ENCODE measurements at regions of chr3 and their contacts with region 1.

Region 1: DNA sequence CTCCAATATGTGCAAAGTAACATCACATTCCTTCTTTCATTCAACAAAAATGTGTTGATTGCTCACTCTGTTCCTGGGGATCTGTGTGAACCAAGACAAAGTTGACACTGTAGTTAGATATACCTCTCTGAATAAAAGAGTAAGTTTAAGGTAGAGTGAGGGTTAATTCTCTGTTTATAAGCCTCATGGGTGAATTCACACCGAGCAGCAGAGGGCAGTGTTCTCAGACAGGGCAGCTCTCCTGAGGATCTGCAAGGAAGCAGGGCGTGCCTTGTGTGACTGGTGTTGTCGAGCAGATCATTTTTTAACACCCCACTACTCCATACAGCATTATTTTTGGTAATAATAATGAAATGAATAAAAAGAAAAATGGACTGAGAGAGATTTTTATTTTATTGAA is 34.4 kb downstream of the PAQR9 start:
- DNase-seq: peak; percentile 61
- ATAC-seq: peak; percentile 82
- H3K4me3 ChIP-seq: no peak overlapping the region
- H3K27ac ChIP-seq: no peak overlapping the region
- H3K4me1 ChIP-seq: no peaks in the 10 kb centered on the region
- H3K27me3 ChIP-seq: peaks cover 16% of the 10 kb centered on the region
- CTCF ChIP-seq: peak; percentile 57
- POLR2A ChIP-seq: no peak
- RAD21 ChIP-seq: peak; percentile 59

Region 2: DNA sequence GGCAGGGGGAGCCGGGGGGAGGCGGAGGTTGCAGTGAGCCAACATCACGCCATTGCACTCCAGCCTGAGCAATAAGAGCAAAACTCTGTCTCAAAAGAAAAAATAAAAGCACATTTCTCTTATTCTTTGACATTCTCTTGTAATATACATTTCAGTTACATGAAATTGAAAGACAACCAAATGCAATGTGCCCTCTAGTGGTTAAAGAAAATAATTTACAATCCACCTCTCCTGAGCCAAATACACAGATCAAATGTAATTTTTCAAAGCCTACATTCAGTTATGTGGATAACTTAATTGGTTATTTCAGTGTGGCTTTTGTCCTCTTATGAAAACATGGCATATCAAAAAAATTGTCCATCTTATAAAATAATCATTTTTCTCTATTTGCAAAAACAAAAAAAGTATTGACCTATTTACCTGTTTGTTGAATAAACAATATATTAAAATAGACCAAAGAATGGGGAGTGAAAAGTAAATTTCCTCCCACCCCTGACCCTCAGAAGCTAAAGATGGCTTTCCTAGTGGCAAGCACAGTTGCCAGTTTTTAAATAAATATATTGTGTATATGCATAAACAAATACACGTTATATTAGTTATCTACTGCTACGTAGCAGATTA is 58.1 kb after region 1 on chr3:
- CTCF ChIA-PET with region 1: no interaction called
- POLR2A ChIA-PET with region 1: no interaction called
- dilution Hi-C with region 1: no loop called
- in situ Hi-C with region 1: no loop called
- intact Hi-C with region 1: loop called (anchors 1 kb)
- DNase-seq: peak; percentile 55
- ATAC-seq: peak; percentile 65
- H3K4me3 ChIP-seq: no peak overlapping the region
- H3K27ac ChIP-seq: no peak overlapping the region
- H3K4me1 ChIP-seq: no peaks in the 10 kb centered on the region
- H3K27me3 ChIP-seq: peaks cover 17% of the 10 kb centered on the region
- CTCF ChIP-seq: peak; percentile 68
- POLR2A ChIP-seq: no peak
- RAD21 ChIP-seq: peak; percentile 63

Region 3: GRCh38 chr3:142993958-142994442 is 64.9 kb after region 1 on chr3:
- CTCF ChIA-PET with region 1: no interaction called
- POLR2A ChIA-PET with region 1: no interaction called
- dilution Hi-C with region 1: no loop called
- in situ Hi-C with region 1: no loop called
- intact Hi-C with region 1: loop called (anchors 1 kb)
- DNase-seq: peak; percentile 72
- ATAC-seq: peak; percentile 66
- H3K4me3 ChIP-seq: no peak overlapping the region
- H3K27ac ChIP-seq: no peak overlapping the region
- H3K4me1 ChIP-seq: peaks cover 2% of the 10 kb centered on the region; the same call in 1 of the 2 replicates
- H3K27me3 ChIP-seq: no peaks in the 10 kb centered on the region; the same call in 1 of the 2 replicates
- CTCF ChIP-seq: peak; percentile 78
- POLR2A ChIP-seq: no peak
- RAD21 ChIP-seq: peak; percentile 81

Region 4: GRCh38 chr3:143004823-143005222 is 75.7 kb after region 1 on chr3:
- CTCF ChIA-PET with region 1: no interaction called
- POLR2A ChIA-PET with region 1: no interaction called
- dilution Hi-C with region 1: no loop called
- in situ Hi-C with region 1: no loop called
- intact Hi-C with region 1: no loop called
- DNase-seq: no peak
- ATAC-seq: no peak
- H3K4me3 ChIP-seq: no peak overlapping the region
- H3K27ac ChIP-seq: no peak overlapping the region
- H3K4me1 ChIP-seq: no peaks in the 10 kb centered on the region; the same call in 1 of the 2 replicates
- H3K27me3 ChIP-seq: no peaks in the 10 kb centered on the region
- CTCF ChIP-seq: no peak
- POLR2A ChIP-seq: no peak
- RAD21 ChIP-seq: no peak

Region 5: GRCh38 chr3:143119009-143119914 is 190.2 kb after region 1 on chr3 and contains the start of gene CHST2:
- CTCF ChIA-PET with region 1: no interaction called
- POLR2A ChIA-PET with region 1: no interaction called
- dilution Hi-C with region 1: no loop called
- in situ Hi-C with region 1: no loop called
- intact Hi-C with region 1: no loop called
- DNase-seq: peak; percentile 71
- ATAC-seq: peak; percentile 96
- H3K4me3 ChIP-seq: peak within 1 kb of the TSS; percentile 94
- H3K27ac ChIP-seq: peak within 1 kb of the TSS; percentile 33; the same call in 1 of the 2 replicates
- H3K4me1 ChIP-seq: no peaks in the 10 kb centered on the region
- H3K27me3 ChIP-seq: peaks cover 12% of the 10 kb centered on the region
- CTCF ChIP-seq: no peak
- POLR2A ChIP-seq: no peak
- RAD21 ChIP-seq: no peak
- total RNA-seq, gene CHST2: 0.90 and 1.1 TPM in 2 replicates